Calu3 (cell line): ENCODE measurements at regions of chr10 and their contacts with region 1.

Region 1: GRCh38 chr10:28137907-28138880 is 139.3 kb upstream of the ODAD2 start:
- DNase-seq: no peak
- H3K4me3 Mint-ChIP-seq: no peak overlapping the region
- H3K27ac Mint-ChIP-seq: no peak overlapping the region
- H3K4me1 Mint-ChIP-seq: peaks cover 11% of the 10 kb centered on the region
- H3K27me3 Mint-ChIP-seq: no peaks in the 10 kb centered on the region
- CTCF ChIP-seq: no peak

Region 2: GRCh38 chr10:27944005-27944404 is 194.2 kb before region 1 on chr10:
- CTCF ChIA-PET with region 1: no interaction called
- intact Hi-C with region 1: no loop called
- DNase-seq: no peak
- H3K4me3 Mint-ChIP-seq: no peak overlapping the region
- H3K27ac Mint-ChIP-seq: no peak overlapping the region
- H3K4me1 Mint-ChIP-seq: no peaks in the 10 kb centered on the region
- H3K27me3 Mint-ChIP-seq: no peaks in the 10 kb centered on the region
- CTCF ChIP-seq: no peak

Region 3: GRCh38 chr10:28160866-28161405 is 22.7 kb after region 1 on chr10:
- CTCF ChIA-PET with region 1: no interaction called
- intact Hi-C with region 1: loop called (anchors 1 kb)
- DNase-seq: no peak
- H3K4me3 Mint-ChIP-seq: no peak overlapping the region
- H3K27ac Mint-ChIP-seq: no peak overlapping the region
- H3K4me1 Mint-ChIP-seq: no peaks in the 10 kb centered on the region
- H3K27me3 Mint-ChIP-seq: no peaks in the 10 kb centered on the region
- CTCF ChIP-seq: no peak

Region 4: DNA sequence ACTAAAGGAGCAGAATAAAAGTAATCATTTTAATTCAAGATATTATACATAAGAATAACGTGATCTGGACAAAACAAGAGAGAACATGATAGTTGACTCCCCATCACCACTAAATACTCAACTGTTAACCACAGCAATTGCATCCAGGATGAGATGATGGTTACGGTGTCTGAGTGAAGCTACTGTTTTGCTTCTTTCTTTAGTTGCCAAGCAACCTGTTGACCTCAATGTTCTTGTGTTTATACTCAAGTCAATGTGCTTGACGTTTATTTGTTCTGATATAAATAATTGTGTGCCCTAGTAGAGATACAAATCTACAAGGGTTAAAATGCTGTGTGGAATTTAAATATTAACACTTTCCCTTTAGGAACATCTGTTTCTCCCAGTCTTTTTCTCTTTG is 196.1 kb after region 1 on chr10:
- CTCF ChIA-PET with region 1: no interaction called
- intact Hi-C with region 1: no loop called
- DNase-seq: no peak
- H3K4me3 Mint-ChIP-seq: no peak overlapping the region
- H3K27ac Mint-ChIP-seq: no peak overlapping the region
- H3K4me1 Mint-ChIP-seq: no peaks in the 10 kb centered on the region
- H3K27me3 Mint-ChIP-seq: no peaks in the 10 kb centered on the region
- CTCF ChIP-seq: no peak